Posterior cingulate gyrus (tissue), 11 donors: ENCODE measurements at regions of chr19 and their contacts with region 1.

Region 1: DNA sequence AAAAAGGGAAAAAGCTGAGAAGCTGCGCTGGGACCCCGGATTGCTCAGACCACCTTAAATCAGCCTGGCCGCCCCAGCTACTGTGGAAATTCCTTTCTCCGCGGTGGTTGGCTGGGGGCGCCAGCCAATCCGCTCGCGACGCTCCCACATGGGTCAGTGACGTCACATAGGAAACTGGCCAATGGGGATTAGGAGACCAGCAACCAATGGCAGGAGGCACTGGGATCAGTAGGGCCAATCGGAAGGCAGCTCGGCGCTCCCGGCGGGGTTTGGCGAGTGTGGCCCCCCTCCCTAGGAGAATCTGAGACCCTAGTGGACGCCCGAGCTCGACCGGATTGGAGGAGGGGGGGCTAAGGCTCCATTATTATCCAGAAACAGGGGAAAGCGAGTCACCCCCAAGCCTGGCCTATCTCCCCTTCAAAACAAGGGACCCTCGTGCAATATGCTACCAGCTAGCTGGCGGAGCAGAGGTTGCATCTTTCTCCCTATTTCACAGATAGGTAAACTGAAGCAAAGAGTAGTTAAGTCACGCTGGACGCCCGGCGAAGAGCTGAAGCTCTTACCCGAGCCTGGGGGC is 6.5 kb upstream of the TLE2 start:
- DNase-seq: peak; percentile 89 to 99 (median 94)

Region 2: GRCh38 chr19:2977001-2977685 is 58.5 kb before region 1 on chr19 and contains the start of gene TLE6:
- intact Hi-C with region 1: loop called (anchors 1 kb)
- DNase-seq: peak; percentile 87 to 100 (median 93)

Region 3: GRCh38 chr19:3094601-3095437 is 59.2 kb after region 1 on chr19:
- intact Hi-C with region 1: loop called (anchors 2 kb)
- DNase-seq: peak in 1 of 10 donors; percentile 72